ENCODE measurements at regions of chr5 and their contacts with region 1.

Region 1: DNA sequence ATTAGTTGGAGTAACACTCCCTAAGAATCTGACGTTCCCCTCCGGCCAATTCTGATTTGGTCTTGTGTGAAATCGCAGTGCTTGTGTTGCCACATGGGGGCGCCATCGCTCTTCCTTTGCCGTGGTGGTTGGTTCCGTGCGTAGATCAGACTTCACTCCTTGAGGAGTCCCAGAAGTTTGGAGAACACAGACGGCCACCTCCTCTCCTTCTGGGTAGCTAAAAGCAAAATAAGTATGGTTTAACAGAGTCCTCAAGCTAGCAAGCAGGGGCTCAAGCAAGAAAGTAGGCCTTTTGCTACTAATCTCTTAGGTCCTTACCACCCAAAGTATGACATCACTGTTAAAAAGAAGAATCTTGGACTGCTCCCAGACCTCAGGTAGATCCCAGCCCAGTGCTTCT is 59.5 kb downstream of the HSPA4 start:
- DNase-seq: peak; percentile 80
- ATAC-seq: peak; percentile 80
- H3K4me3 ChIP-seq: no peak overlapping the region
- H3K27ac ChIP-seq: no peak overlapping the region
- H3K4me1 ChIP-seq: peaks cover 5% of the 10 kb centered on the region; the same call in 1 of the 2 replicates
- H3K27me3 ChIP-seq: peaks cover 3% of the 10 kb centered on the region; the same call in 1 of the 2 replicates
- CTCF ChIP-seq: peak; percentile 97
- POLR2A ChIP-seq: peak; percentile 56
- RAD21 ChIP-seq: peak; percentile 99

Region 2: GRCh38 chr5:133147411-133147810 is 36.1 kb after region 1 on chr5:
- CTCF ChIA-PET with region 1: no interaction called
- POLR2A ChIA-PET with region 1: no interaction called
- dilution Hi-C with region 1: no loop called
- in situ Hi-C with region 1: no loop called
- intact Hi-C with region 1: no loop called
- DNase-seq: no peak
- ATAC-seq: no peak
- H3K4me3 ChIP-seq: no peak overlapping the region
- H3K27ac ChIP-seq: no peak overlapping the region
- H3K4me1 ChIP-seq: no peaks in the 10 kb centered on the region
- H3K27me3 ChIP-seq: peaks cover 1% of the 10 kb centered on the region
- CTCF ChIP-seq: no peak
- POLR2A ChIP-seq: no peak
- RAD21 ChIP-seq: no peak

Region 3: DNA sequence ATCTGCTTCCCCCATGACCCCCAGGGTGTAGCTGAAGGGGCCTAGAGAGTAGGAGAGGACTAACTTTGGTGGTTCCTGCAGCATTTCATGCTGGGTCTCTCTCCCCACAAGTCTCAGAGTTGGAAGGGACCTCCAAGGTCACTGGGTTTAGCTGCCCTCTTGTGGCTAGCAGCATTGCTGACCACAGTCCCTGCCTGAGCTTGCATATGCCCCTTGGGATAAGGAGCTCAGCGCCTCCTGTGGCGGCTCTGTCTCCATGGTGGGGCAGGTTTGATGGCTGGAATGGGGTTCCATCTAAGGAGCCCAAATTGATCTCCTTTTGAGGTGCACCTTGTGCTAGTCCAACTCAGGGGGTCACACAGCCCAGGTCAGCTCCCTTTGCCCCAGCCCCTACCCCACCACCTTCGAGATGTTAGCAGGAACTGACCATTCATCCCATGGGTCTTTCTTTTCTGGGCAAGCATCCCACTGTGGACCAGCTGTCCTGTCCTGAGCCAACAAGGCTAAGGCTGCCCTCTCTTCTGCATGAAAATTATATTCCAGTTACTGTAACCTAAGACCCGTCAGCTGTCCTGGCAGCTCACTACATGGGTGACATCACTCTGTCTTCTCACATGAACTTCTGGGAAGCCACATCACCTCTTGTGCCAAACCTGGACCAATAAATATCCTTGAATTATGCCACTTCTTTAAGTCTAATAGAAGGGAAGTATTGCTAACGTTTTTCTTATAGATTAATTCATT is 136.8 kb after region 1 on chr5:
- CTCF ChIA-PET with region 1: interaction called, 5 read pairs
- POLR2A ChIA-PET with region 1: no interaction called
- dilution Hi-C with region 1: no loop called
- in situ Hi-C with region 1: loop called (anchors 5 kb)
- intact Hi-C with region 1: loop called (anchors 1 kb)
- DNase-seq: peak; percentile 49
- ATAC-seq: peak; percentile 62
- H3K4me3 ChIP-seq: no peak overlapping the region
- H3K27ac ChIP-seq: no peak overlapping the region
- H3K4me1 ChIP-seq: peaks cover 15% of the 10 kb centered on the region; the same call in 1 of the 2 replicates
- H3K27me3 ChIP-seq: peaks cover 10% of the 10 kb centered on the region
- CTCF ChIP-seq: peak; percentile 59
- POLR2A ChIP-seq: no peak
- RAD21 ChIP-seq: peak; percentile 57

Region 4: DNA sequence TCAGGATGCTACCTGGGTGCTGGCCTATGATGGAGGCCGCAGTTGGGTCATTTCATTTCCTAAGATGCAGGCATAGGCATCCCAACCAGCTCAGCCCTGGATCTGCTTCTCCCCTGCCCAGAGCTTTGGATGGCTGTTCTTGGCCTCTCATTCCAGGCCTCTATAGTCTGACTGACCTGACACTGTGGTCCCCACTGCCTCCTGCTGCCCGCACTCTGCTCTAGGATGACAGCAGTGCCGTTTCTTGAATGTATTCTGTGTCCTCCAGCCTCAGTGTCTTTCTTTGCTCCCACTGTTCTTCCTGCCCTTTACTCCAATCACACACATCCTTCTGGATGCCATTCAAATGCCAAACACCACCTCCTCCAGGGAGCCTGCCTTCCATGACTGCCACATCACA is 176.2 kb after region 1 on chr5:
- CTCF ChIA-PET with region 1: interaction called, 7 read pairs
- POLR2A ChIA-PET with region 1: no interaction called
- dilution Hi-C with region 1: no loop called
- in situ Hi-C with region 1: loop called (anchors 10 kb)
- intact Hi-C with region 1: loop called (anchors 1 kb)
- DNase-seq: peak; percentile 44
- ATAC-seq: peak; percentile 75
- H3K4me3 ChIP-seq: no peak overlapping the region
- H3K27ac ChIP-seq: no peak overlapping the region
- H3K4me1 ChIP-seq: no peaks in the 10 kb centered on the region
- H3K27me3 ChIP-seq: peaks cover 9% of the 10 kb centered on the region; the same call in 1 of the 2 replicates
- CTCF ChIP-seq: peak; percentile 58
- POLR2A ChIP-seq: no peak
- RAD21 ChIP-seq: peak; percentile 69

Region 5: GRCh38 chr5:133423618-133424282 is 312.5 kb after region 1 on chr5:
- CTCF ChIA-PET with region 1: interaction called, 3 read pairs
- POLR2A ChIA-PET with region 1: no interaction called
- dilution Hi-C with region 1: no loop called
- in situ Hi-C with region 1: no loop called
- intact Hi-C with region 1: loop called (anchors 1 kb)
- DNase-seq: peak; percentile 12
- ATAC-seq: peak; percentile 91
- H3K4me3 ChIP-seq: no peak overlapping the region
- H3K27ac ChIP-seq: no peak overlapping the region
- H3K4me1 ChIP-seq: no peaks in the 10 kb centered on the region
- H3K27me3 ChIP-seq: peaks cover 8% of the 10 kb centered on the region
- CTCF ChIP-seq: peak; percentile 65
- POLR2A ChIP-seq: no peak
- RAD21 ChIP-seq: peak; percentile 47; the same call in 1 of the 2 replicates

Region 6: GRCh38 chr5:133539818-133540217 is 428.5 kb after region 1 on chr5:
- CTCF ChIA-PET with region 1: no interaction called
- POLR2A ChIA-PET with region 1: no interaction called
- dilution Hi-C with region 1: no loop called
- in situ Hi-C with region 1: no loop called
- intact Hi-C with region 1: loop called (anchors 5 kb)
- DNase-seq: no peak
- ATAC-seq: 0 out of 2 replicates have a peak, but pooled peaks have one; percentile 27
- H3K4me3 ChIP-seq: no peak overlapping the region
- H3K27ac ChIP-seq: no peak overlapping the region
- H3K4me1 ChIP-seq: no peaks in the 10 kb centered on the region
- H3K27me3 ChIP-seq: 0 out of 2 replicates have a peak, but pooled peaks cover 1% of the 10 kb centered on the region
- CTCF ChIP-seq: no peak
- POLR2A ChIP-seq: no peak
- RAD21 ChIP-seq: no peak

Region 7: DNA sequence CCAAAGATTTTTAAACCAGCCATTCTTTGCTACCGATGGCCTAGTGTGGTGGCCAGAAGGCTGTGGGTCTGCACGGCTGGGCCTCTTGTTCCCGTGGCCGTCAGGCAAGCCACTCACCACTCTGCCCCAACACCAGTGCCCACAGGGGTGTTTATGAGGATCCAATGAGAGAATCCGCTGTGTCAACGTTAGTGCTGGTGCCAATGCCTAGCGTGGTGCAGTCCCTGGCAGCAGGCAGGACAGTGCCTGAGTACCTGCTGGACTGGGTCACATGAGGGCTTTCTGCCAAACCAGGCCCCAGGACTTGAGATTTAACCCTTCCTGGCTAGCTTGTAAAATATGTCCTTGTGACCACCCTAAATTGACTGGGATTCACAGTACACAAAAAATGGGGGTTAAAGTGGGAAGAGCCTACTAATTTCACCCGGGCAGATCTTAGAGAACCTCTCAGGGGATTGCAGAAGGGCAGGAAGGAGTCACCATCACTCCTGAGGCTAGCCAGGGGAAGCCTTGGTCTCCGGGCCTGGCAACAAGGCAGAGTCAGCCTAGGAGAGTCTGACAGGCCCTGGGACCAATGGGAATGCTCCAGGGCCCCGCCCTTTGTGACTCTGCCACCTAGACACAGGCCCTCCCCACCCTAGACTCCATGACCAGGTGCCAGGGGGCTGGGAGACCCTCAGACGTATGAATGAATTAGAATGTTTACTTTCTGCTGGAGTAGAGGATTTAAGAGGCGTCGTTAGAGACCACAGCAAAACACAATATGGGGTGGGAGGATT is 564.3 kb after region 1 on chr5:
- CTCF ChIA-PET with region 1: no interaction called
- POLR2A ChIA-PET with region 1: no interaction called
- dilution Hi-C with region 1: no loop called
- in situ Hi-C with region 1: no loop called
- intact Hi-C with region 1: loop called (anchors 10 kb)
- DNase-seq: no peak
- ATAC-seq: no peak
- H3K4me3 ChIP-seq: no peak overlapping the region
- H3K27ac ChIP-seq: no peak overlapping the region
- H3K4me1 ChIP-seq: no peaks in the 10 kb centered on the region
- H3K27me3 ChIP-seq: peaks cover 7% of the 10 kb centered on the region
- CTCF ChIP-seq: no peak
- POLR2A ChIP-seq: no peak
- RAD21 ChIP-seq: no peak

Region 8: DNA sequence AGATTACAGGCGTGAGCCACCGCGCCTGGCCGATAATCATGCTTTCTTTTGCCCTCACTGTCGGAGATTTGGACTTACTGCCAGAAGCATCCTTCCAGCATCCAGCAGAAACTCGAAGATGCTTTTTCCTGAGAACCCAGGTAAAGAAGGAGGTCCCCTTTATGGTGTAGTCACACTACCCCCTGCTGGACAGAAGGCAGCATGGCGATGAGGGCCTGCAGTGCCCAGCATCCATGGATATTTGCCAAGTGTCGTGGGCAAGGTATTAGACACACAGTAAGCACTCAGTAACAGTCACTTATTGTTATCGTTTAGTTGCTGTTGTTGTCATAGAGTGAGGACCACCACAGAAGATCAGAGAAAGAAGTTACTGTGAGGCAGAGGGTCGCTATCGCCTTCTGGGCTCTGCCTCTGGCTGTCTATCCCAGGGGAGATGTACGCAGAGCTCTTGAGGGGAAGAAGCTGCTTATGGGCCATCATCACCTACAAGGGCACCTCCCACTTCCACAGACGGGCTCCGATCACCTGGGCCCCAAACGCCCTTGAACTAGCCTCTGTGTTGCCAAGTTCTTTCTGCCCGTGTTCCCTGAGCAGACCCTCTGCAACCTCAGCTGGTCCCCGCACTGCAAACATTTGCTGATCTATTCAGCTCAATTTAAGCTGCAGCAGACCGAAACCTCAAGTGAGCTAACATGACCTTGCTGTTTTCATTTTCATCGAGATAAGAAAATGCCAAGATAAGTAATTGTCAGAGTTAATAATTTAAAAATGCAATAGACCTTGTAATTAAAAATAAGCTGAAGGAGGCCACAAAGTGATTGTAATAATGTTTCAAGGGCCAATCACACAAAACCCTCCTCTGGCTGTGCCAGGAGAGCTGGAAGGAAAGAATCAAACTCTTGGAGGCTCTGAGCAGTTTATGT is 833.2 kb after region 1 on chr5:
- CTCF ChIA-PET with region 1: no interaction called
- POLR2A ChIA-PET with region 1: no interaction called
- dilution Hi-C with region 1: no loop called
- in situ Hi-C with region 1: loop called (anchors 10 kb)
- intact Hi-C with region 1: loop called (anchors 5 kb)
- DNase-seq: peak; percentile 44
- ATAC-seq: peak; percentile 56
- H3K4me3 ChIP-seq: no peak overlapping the region
- H3K27ac ChIP-seq: no peak overlapping the region
- H3K4me1 ChIP-seq: 0 out of 2 replicates have a peak, but pooled peaks cover 2% of the 10 kb centered on the region
- H3K27me3 ChIP-seq: peaks cover 12% of the 10 kb centered on the region
- CTCF ChIP-seq: peak; percentile 67
- POLR2A ChIP-seq: no peak
- RAD21 ChIP-seq: peak; percentile 80